HEK293 (cell line): ENCODE measurements at regions of chr19 and their contacts with region 1.

Region 1: DNA sequence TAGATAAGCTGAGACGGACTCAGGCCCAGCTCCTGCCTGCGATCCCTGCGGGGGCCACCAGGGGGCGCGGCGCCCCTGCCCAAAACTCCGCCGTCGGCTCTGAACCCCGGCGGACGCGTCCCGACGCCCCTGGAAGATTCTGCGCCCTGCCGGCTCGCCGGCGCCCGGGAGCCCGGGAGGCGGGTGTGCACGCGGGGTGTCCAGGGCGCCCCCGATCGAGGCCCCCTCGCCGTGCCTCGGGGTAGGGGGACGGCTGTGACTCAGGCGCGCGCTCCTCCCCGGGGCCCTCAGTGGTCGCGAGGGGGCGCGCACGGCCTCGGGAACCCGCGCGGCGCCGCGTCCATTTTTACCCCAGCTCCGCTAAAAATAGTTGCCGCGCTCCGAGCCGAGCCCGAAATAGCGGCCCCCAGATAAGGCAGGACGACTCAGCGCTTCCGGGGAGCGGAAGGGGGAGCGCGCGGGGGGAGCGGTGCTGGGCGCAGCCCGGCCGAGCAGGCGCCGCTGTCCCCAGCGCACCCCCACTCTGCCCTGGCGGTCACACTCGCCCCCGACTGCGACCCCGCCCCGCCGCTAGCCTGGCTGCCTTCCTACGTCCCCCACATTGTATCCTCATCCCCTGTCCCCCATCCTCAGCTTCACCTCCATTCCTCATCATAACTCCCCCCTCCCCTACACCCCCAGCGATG is 16.0 kb upstream of the ERCC1 start:
- H3K4me3 ChIP-seq: peak overlapping the region; percentile 54
- H3K27ac ChIP-seq: peak overlapping the region; percentile 40; the same call in 1 of the 2 replicates
- H3K4me1 ChIP-seq: 0 out of 2 replicates have a peak, but pooled peaks cover 4% of the 10 kb centered on the region
- CTCF ChIP-seq: peak; percentile 67

Region 2: GRCh38 chr19:45385392-45386221 is 54.1 kb before region 1 on chr19:
- CTCF ChIA-PET with region 1: no interaction called
- POLR2A ChIA-PET with region 1: no interaction called
- H3K4me3 ChIP-seq: no peak overlapping the region
- H3K27ac ChIP-seq: no peak overlapping the region
- H3K4me1 ChIP-seq: no peaks in the 10 kb centered on the region
- CTCF ChIP-seq: no peak

Region 3: GRCh38 chr19:45423589-45424190 is 16.0 kb before region 1 on chr19 and contains the start of gene ERCC1:
- CTCF ChIA-PET with region 1: interaction called, 23 read pairs
- POLR2A ChIA-PET with region 1: interaction called, 5 read pairs
- H3K4me3 ChIP-seq: peak within 1 kb of the TSS; percentile 50
- H3K27ac ChIP-seq: peak within 1 kb of the TSS; percentile 88
- H3K4me1 ChIP-seq: peaks cover 10% of the 10 kb centered on the region
- CTCF ChIP-seq: no peak

Region 4: DNA sequence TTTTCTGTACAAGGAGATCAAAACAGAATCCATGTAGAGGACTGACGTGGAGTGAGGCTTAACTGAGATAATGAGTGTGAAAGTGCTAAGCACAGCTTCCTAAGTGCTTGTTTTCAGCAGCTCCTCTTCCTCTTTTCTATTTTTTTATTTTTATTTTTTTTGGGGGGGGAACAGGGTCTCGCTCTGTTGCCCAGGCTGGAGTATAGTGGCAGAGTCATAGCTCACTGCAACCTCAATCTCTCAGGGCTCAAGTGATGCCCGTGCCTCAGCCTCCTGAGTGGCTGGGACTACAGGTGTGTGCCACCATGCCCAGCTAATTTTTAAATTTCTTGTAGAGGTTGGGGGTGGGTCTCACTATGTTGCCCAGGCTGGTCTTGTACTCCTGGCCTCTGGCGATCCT is 22.5 kb after region 1 on chr19:
- CTCF ChIA-PET with region 1: interaction called, 86 read pairs
- POLR2A ChIA-PET with region 1: interaction called, 10 read pairs
- H3K4me3 ChIP-seq: no peak overlapping the region
- H3K27ac ChIP-seq: no peak overlapping the region
- H3K4me1 ChIP-seq: no peaks in the 10 kb centered on the region
- CTCF ChIP-seq: no peak

Region 5: GRCh38 chr19:45478454-45479238 is 38.9 kb after region 1 on chr19:
- CTCF ChIA-PET with region 1: interaction called, 295 read pairs
- POLR2A ChIA-PET with region 1: interaction called, 41 read pairs
- H3K4me3 ChIP-seq: peak overlapping the region; percentile 52
- H3K27ac ChIP-seq: peak overlapping the region; percentile 98
- H3K4me1 ChIP-seq: no peaks in the 10 kb centered on the region
- CTCF ChIP-seq: peak; percentile 95